Activated CD4-positive, alpha-beta T cell treated with anti-CD3 and anti-CD28 coated beads, Interleukin-2, amount 10 ng/mL, durations not matched to agents 24 days and 14 days (primary cell): ENCODE measurements at regions of chr3 and their contacts with region 1.

Region 1: GRCh38 chr3:149086232-149086988 is at the start of gene HLTF:
- DNase-seq: peak; percentile 97
- H3K4me3 Mint-ChIP-seq: peak within 1 kb of the TSS; percentile 98
- H3K27ac Mint-ChIP-seq: peak within 1 kb of the TSS; percentile 88
- H3K4me1 Mint-ChIP-seq: peaks cover 19% of the 10 kb centered on the region
- H3K27me3 Mint-ChIP-seq: no peaks in the 10 kb centered on the region
- total RNA-seq, gene HLTF: 18.9 and 19.6 TPM in 2 replicates

Region 2: GRCh38 chr3:148884261-148884660 is 202.1 kb before region 1 on chr3:
- intact Hi-C with region 1: no loop called
- DNase-seq: no peak
- H3K4me3 Mint-ChIP-seq: no peak overlapping the region
- H3K27ac Mint-ChIP-seq: no peak overlapping the region
- H3K4me1 Mint-ChIP-seq: no peaks in the 10 kb centered on the region
- H3K27me3 Mint-ChIP-seq: peaks cover 3% of the 10 kb centered on the region

Region 3: GRCh38 chr3:148911173-148911572 is 175.2 kb before region 1 on chr3:
- intact Hi-C with region 1: no loop called
- DNase-seq: no peak
- H3K4me3 Mint-ChIP-seq: no peak overlapping the region
- H3K27ac Mint-ChIP-seq: no peak overlapping the region
- H3K4me1 Mint-ChIP-seq: no peaks in the 10 kb centered on the region
- H3K27me3 Mint-ChIP-seq: peaks cover 1% of the 10 kb centered on the region

Region 4: GRCh38 chr3:148955544-148956346 is 130.7 kb before region 1 on chr3:
- intact Hi-C with region 1: loop called (anchors 10 kb)
- DNase-seq: peak; percentile 76
- H3K4me3 Mint-ChIP-seq: no peak overlapping the region
- H3K27ac Mint-ChIP-seq: no peak overlapping the region
- H3K4me1 Mint-ChIP-seq: peaks cover 5% of the 10 kb centered on the region
- H3K27me3 Mint-ChIP-seq: peaks cover 15% of the 10 kb centered on the region

Region 5: DNA sequence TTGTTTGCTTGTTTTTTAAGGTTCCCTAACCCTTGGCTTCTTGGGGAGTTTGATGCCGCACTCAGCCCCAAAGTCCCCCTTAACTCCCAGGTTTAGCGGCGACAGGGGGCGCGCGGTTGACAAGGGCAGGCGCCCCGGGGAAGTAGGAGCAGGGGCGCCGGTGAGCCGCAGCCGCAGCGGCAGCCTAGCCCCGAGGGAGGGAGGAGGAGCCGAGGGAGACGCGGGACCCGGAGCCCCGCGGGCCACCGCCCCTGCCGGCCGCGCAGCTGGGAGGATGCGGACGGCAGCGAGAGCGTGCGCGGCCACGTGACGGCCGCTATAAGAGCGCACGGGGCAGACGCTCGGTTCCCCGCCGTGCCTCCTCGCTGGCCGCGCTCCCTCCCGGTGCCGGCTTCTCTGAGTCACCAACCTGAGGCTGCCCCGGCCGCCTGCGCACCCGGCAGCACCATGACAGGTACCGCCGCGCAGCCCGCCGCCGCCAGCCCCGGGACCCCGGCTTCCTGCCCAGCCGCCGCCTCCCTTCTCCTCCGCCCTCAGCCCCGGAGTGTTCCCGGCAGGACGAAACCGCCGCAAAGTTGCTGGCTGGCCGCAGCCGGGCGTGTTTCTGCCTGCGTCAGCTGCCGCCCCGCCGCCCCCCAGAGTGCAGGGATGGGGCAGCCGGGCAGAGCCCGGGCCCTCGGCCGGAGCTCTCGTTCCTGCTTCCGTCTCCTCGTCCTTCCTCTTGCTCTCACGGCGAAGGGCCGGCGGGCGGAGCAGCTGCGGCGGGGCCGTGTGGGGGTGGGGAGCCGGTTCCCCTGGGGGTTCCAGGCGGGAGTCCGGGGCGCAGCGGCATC is 95.0 kb before region 1 on chr3 and contains the start of gene GYG1:
- intact Hi-C with region 1: loop called (anchors 1 kb)
- DNase-seq: peak; percentile 93
- H3K4me3 Mint-ChIP-seq: peak within 1 kb of the TSS; percentile 82
- H3K27ac Mint-ChIP-seq: peak within 1 kb of the TSS; percentile 87
- H3K4me1 Mint-ChIP-seq: peaks cover 25% of the 10 kb centered on the region
- H3K27me3 Mint-ChIP-seq: no peaks in the 10 kb centered on the region
- total RNA-seq, gene GYG1: 27.4 and 28.0 TPM in 2 replicates

Region 6: GRCh38 chr3:149042789-149043386 is 43.5 kb before region 1 on chr3:
- intact Hi-C with region 1: loop called (anchors 1 kb)
- DNase-seq: no peak
- H3K4me3 Mint-ChIP-seq: peak overlapping the region; percentile 58
- H3K27ac Mint-ChIP-seq: peak overlapping the region; percentile 64
- H3K4me1 Mint-ChIP-seq: peaks cover 22% of the 10 kb centered on the region
- H3K27me3 Mint-ChIP-seq: no peaks in the 10 kb centered on the region

Region 7: DNA sequence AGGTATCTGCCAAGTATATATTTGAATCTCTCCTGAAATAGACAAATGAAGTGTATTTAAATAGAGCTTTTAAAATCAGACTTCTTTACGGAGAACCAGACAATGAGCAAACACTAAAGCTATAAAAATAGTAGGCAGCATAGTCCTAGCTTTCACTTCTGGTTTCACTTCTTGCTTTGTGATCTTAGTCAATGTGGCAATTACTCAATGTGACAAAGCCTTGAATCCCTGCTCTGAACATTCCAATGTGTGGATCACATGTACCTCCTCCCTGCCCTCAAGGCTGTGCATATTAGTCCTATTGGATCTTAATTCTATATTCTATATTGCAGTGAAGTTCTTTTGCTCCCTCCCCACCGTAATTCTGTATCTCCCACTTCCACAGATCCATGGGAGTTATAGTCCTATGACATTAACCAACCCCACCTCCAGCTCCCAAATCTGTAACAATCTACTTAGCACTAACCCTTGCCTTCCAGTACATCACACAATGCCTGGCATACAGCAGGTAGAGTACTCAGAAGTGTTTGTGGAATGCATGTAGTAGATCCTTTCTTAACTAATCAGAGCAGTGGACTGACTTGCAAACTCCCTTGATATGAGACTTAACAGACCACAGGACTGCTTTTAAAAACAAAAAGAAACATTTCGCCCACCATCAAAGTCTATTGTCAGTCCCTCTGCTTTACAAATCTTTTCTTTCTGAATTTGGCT is 159.5 kb after region 1 on chr3:
- intact Hi-C with region 1: no loop called
- DNase-seq: peak; percentile 58
- H3K4me3 Mint-ChIP-seq: peak overlapping the region; percentile 55
- H3K27ac Mint-ChIP-seq: peak overlapping the region; percentile 21
- H3K4me1 Mint-ChIP-seq: peaks cover 43% of the 10 kb centered on the region
- H3K27me3 Mint-ChIP-seq: peaks cover 4% of the 10 kb centered on the region